ENCODE measurements at regions of chr3 and their contacts with region 1.

Region 1: DNA sequence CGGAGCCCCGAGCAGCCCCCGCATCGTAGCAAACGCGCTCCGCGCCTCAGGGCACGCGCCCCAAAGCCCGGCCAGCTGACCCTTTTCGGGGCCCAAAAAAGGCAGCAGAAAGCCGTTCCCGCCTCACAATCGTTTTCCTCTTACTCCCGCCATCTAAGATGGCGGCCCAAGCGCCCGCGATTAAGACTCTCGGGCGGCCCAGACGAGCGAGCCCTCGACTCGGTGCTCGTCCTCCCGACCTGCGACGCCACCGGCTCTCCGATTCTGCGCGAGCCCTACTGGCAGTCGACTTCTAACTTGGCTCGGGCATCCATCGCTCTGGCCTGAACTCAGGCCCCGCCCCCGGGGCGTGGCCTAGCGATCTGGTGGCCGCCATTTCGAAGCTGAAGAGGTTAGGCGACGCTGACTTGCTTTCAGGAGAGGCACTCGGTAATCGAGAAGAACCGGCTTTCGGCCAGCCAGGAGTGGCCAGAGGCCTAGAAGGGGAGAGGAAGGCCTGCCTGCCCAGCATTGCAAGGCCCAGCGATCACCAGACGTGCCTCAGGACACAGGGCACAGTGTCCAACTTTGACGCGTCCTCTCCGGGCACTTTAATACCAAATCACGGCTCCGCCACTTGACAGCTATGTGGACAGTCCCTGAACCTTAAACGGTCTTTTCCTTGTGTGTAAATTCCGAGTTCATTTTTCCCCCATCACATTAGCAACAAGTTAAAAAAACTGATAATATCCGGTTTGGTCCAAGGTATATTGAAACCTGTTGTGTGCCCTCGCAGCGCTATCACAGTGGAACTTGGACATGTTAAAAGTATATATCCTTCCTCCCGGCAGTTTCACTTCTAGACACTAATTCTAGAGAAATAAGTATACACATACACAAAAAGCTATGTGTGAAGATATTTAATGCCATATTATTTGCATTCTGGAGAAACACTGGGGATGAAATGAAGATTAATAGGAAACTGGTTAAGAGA is at the start of gene RAF1:
- DNase-seq: peak; percentile 92
- H3K4me3 ChIP-seq: peak within 1 kb of the TSS; percentile 86
- H3K27me3 ChIP-seq: no peaks in the 10 kb centered on the region
- CTCF ChIP-seq: no peak
- polyA plus RNA-seq, gene RAF1: 122 and 134 TPM in 2 replicates

Region 2: DNA sequence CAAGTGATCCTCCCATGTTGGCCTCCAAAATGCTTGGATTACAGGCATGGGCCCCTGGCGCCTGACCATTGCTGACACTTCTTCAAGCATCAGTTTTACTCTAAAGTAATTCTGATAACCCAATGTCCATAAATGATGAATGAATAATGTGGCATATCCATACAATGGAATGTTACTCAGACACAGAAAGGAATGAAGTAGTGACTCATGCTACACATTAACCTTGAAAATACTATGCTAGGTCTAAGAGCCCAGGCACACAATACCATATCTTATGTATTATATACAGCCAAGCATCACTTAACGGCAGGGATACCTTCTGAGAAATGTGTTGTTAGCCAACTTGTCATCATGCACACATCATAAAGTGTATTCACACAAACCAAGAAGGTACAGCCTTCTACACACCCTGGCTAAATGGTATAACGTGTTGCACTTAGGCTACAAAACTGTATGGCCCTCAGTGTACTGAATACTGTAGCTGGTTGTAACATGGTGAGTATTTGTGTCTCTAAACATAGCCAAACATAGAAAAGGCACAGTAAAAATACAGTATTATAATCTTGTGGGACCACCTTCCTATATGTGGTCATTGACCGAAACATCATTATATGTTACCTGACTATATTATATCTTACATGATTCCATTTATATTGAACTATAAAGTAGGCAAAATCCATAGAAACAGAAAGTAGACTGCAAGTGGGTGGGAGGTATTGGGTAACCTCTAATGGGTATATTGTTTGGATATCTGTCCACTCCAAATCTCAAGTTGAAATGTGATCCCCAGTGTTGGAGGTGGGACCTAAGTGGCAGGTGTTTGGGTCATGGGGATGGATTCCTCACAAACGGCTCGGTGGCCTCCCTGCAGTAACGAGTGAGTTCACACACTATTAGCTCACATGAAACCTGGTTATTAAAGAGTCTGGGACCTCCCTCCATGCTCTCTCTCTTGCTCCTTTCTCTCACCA is 75.9 kb before region 1 on chr3:
- CTCF ChIA-PET with region 1: no interaction called
- POLR2A ChIA-PET with region 1: no interaction called
- DNase-seq: no peak
- H3K4me3 ChIP-seq: no peak overlapping the region
- H3K27me3 ChIP-seq: no peaks in the 10 kb centered on the region
- CTCF ChIP-seq: no peak

Region 3: GRCh38 chr3:12622335-12622734 is 41.9 kb before region 1 on chr3:
- CTCF ChIA-PET with region 1: no interaction called
- POLR2A ChIA-PET with region 1: no interaction called
- DNase-seq: no peak
- H3K4me3 ChIP-seq: no peak overlapping the region
- H3K27me3 ChIP-seq: no peaks in the 10 kb centered on the region
- CTCF ChIP-seq: no peak

Region 4: DNA sequence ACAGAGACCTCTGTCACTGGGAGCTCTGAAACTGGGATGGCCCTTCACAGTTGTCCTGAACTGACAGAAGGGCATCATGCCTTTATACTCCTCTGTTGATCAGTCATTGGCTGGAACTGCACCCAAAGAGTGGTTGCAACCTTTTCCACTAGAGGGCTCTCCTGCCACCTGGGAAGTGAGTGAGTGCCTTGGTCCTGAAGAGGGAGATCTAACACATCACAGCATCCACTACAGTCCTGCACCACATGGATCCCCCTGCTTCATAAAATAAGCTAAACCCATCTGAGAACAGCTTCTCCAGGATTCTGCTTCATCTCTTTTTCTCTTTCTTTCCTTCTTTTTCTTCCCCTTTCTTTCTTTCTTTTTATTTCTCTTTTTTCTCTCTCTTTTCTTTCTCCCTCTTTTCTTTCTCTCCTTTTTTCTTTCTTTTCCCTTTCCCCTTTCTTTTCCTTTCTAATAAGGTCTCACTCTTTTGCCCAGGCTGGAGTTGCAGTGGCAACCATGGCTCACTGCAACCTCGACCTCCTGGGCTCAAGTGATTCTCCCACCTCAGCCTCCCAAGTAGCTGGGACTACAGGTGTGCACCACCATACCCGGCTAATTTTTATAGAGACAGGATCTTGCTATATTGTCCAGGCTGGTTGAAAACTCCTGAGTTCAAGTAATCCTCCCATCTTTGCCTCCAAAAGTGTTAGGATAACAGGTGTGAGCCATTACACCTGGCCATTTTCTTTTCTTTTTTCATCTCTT is 42.5 kb after region 1 on chr3:
- CTCF ChIA-PET with region 1: interaction called, 18 read pairs
- POLR2A ChIA-PET with region 1: no interaction called
- DNase-seq: no peak
- H3K4me3 ChIP-seq: no peak overlapping the region
- H3K27me3 ChIP-seq: no peaks in the 10 kb centered on the region
- CTCF ChIP-seq: peak; percentile 76